ENCODE measurements at regions of chr12 and their contacts with region 1.

Region 1: GRCh38 chr12:47767216-47767724 is 5.8 kb upstream of the SLC48A1 start:
- DNase-seq: peak in 2 of 3 donors; percentile 59 to 72
- ATAC-seq: peak; percentile 55 to 70 (median 66)
- H3K4me3 ChIP-seq: no peak overlapping the region
- H3K27ac ChIP-seq: no peak overlapping the region
- H3K4me1 ChIP-seq: peaks cover 0 to 19% (median 3%) of the 10 kb centered on the region in 4 donors
- H3K27me3 ChIP-seq: no peaks in the 10 kb centered on the region
- CTCF ChIP-seq: peak; percentile 50 to 60 (median 58)
- POLR2A ChIP-seq: no peak

Region 2: DNA sequence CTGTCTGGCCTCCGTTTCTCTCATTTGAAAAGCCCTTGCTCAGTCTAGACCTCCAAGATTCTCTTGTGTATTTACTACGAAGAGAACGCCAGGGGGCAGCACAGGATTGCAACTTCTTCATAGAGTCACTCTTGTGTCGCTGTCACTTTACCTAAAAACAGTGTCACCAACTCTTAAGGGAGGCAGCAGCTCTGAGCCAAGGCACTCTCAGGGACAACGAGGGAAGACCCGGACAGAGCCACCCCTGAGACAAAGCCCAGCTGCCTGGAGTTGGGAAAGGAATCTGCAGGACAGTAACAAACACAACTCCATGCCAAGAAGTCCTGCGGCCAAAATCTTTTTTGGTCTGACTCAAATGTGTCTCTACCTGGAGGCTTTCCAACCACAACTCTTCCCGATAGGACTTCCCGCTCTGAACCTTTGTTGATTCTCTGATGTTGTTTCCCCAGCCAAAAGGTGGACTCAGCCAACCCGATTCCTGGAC is 51.8 kb before region 1 on chr12:
- intact Hi-C with region 1: loop called in 1 of 2 experiments (anchors 10 kb)
- DNase-seq: peak; percentile 70 to 80 (median 73)
- ATAC-seq: peak; percentile 80 to 87 (median 84)
- H3K4me3 ChIP-seq: no peak overlapping the region
- H3K27ac ChIP-seq: peak overlapping the region in 2 of 3 donors; percentile 45 to 50
- H3K4me1 ChIP-seq: peaks cover 0 to 23% (median 0%) of the 10 kb centered on the region in 4 donors
- H3K27me3 ChIP-seq: no peaks in the 10 kb centered on the region
- CTCF ChIP-seq: peak; percentile 77 to 86 (median 78)
- POLR2A ChIP-seq: no peak